ENCODE measurements at regions of chr17 and their contacts with region 1.

Region 1: GRCh38 chr17:77140166-77140878 is 447 bp upstream of the SEC14L1 start:
- DNase-seq: peak; percentile 99 to 100
- ATAC-seq: peak; percentile 86 to 97 (median 88)
- H3K4me3 ChIP-seq: peak overlapping the region; percentile 42
- H3K4me3 Mint-ChIP-seq: peak overlapping the region; percentile 79
- H3K27ac ChIP-seq: peak overlapping the region; percentile 80
- H3K27ac Mint-ChIP-seq: peak overlapping the region; percentile 84 to 95
- H3K4me1 ChIP-seq: peaks cover 41% of the 10 kb centered on the region
- H3K4me1 Mint-ChIP-seq: peaks cover 43 to 56% of the 10 kb centered on the region in 2 donors
- H3K27me3 ChIP-seq: no peaks in the 10 kb centered on the region
- H3K27me3 Mint-ChIP-seq: no peaks in the 10 kb centered on the region
- CTCF ChIP-seq: no peak

Region 2: GRCh38 chr17:77088455-77089123 is 51.7 kb before region 1 on chr17:
- intact Hi-C with region 1: loop called (anchors 2 kb)
- DNase-seq: peak; percentile 85 to 94
- ATAC-seq: peak; percentile 90 to 96 (median 95)
- H3K4me3 ChIP-seq: peak overlapping the region; percentile 83
- H3K4me3 Mint-ChIP-seq: peak overlapping the region; percentile 91
- H3K27ac ChIP-seq: peak overlapping the region; percentile 88
- H3K27ac Mint-ChIP-seq: peak overlapping the region; percentile 96 to 99
- H3K4me1 ChIP-seq: peaks cover 38% of the 10 kb centered on the region
- H3K4me1 Mint-ChIP-seq: peaks cover 32 to 38% of the 10 kb centered on the region in 2 donors
- H3K27me3 ChIP-seq: no peaks in the 10 kb centered on the region
- H3K27me3 Mint-ChIP-seq: peaks cover 0 to 8% of the 10 kb centered on the region in 2 donors
- CTCF ChIP-seq: peak; percentile 75

Region 3: GRCh38 chr17:77124192-77124889 is 16.0 kb before region 1 on chr17:
- intact Hi-C with region 1: no loop called
- DNase-seq: no peak
- ATAC-seq: no peak
- H3K4me3 ChIP-seq: no peak overlapping the region
- H3K4me3 Mint-ChIP-seq: no peak overlapping the region
- H3K27ac ChIP-seq: no peak overlapping the region
- H3K27ac Mint-ChIP-seq: no peak overlapping the region
- H3K4me1 ChIP-seq: peaks cover 22% of the 10 kb centered on the region
- H3K4me1 Mint-ChIP-seq: peaks cover 7 to 19% of the 10 kb centered on the region in 2 donors
- H3K27me3 ChIP-seq: no peaks in the 10 kb centered on the region
- H3K27me3 Mint-ChIP-seq: no peaks in the 10 kb centered on the region
- CTCF ChIP-seq: no peak

Measured in natural killer cell (primary cell).